ENCODE measurements at regions of chr12 and their contacts with region 1.

Region 1: GRCh38 chr12:110619534-110619953 is 5.6 kb downstream of the TCTN1 start:
- DNase-seq: peak; percentile 68
- H3K4me3 Mint-ChIP-seq: peak overlapping the region; percentile 51
- H3K27ac Mint-ChIP-seq: peak overlapping the region; percentile 80
- H3K4me1 Mint-ChIP-seq: peaks cover 8% of the 10 kb centered on the region
- H3K27me3 Mint-ChIP-seq: no peaks in the 10 kb centered on the region

Region 2: GRCh38 chr12:110543252-110543959 is 76.1 kb before region 1 on chr12:
- intact Hi-C with region 1: no loop called
- DNase-seq: no peak
- H3K4me3 Mint-ChIP-seq: no peak overlapping the region
- H3K27ac Mint-ChIP-seq: peak overlapping the region; percentile 72
- H3K4me1 Mint-ChIP-seq: peaks cover 36% of the 10 kb centered on the region
- H3K27me3 Mint-ChIP-seq: no peaks in the 10 kb centered on the region

Region 3: GRCh38 chr12:110647631-110648040 is 28.1 kb after region 1 on chr12:
- intact Hi-C with region 1: loop called (anchors 2 kb)
- DNase-seq: peak; percentile 69
- H3K4me3 Mint-ChIP-seq: peak overlapping the region; percentile 8
- H3K27ac Mint-ChIP-seq: peak overlapping the region; percentile 59
- H3K4me1 Mint-ChIP-seq: peaks cover 20% of the 10 kb centered on the region
- H3K27me3 Mint-ChIP-seq: no peaks in the 10 kb centered on the region

Region 4: GRCh38 chr12:110689281-110690126 is 70.0 kb after region 1 on chr12:
- intact Hi-C with region 1: loop called (anchors 2 kb)
- DNase-seq: peak; percentile 89
- H3K4me3 Mint-ChIP-seq: peak overlapping the region; percentile 86
- H3K27ac Mint-ChIP-seq: peak overlapping the region; percentile 96
- H3K4me1 Mint-ChIP-seq: peaks cover 44% of the 10 kb centered on the region
- H3K27me3 Mint-ChIP-seq: peaks cover 5% of the 10 kb centered on the region

Region 5: DNA sequence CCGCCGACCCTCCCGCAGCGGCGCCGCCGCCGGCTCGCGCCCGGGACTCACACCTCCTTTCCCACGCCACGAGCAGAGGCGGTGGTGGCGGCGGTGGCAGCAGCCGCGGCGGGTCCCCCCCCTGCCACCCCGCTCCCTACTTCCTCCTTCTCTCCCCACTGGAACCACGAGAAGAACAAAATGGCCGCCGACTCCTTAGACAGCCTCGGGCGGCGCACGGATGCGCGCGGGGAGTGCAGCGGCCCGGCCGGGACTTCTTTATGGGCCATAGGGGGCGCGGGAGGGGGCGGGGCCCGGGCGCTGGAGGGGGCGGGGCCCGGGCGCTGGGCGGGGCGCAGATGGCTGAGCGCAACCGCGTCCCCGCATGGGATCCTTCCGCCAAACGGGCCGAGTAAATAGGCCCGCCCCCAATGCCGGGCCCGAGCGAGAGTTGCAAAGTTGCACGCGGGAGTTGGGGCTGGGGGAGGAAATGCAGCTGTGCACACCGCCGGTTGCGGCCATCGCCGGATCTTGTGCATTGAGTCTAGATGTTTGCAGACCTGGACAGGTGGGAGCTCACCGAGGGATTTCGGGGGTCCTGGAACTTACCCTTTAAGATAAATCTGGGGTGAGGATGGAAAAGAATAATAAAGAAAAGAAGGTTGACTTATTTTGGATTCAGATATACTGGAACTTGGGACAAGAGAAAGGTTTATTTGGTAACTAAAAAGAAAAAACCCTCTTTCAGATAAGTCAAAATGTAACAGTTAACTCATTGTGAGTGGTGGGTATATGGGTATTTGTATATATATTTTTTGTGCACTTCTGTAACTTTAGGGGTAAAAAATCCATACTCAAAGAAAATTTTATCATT is 123.4 kb after region 1 on chr12 and contains the start of gene PPP1CC:
- intact Hi-C with region 1: loop called (anchors 2 kb)
- DNase-seq: peak; percentile 97
- H3K4me3 Mint-ChIP-seq: peak within 1 kb of the TSS; percentile 99
- H3K27ac Mint-ChIP-seq: peak within 1 kb of the TSS; percentile 99
- H3K4me1 Mint-ChIP-seq: peaks cover 35% of the 10 kb centered on the region
- H3K27me3 Mint-ChIP-seq: no peaks in the 10 kb centered on the region
- total RNA-seq, gene PPP1CC: 459 and 489 TPM in 2 replicates

Region 6: DNA sequence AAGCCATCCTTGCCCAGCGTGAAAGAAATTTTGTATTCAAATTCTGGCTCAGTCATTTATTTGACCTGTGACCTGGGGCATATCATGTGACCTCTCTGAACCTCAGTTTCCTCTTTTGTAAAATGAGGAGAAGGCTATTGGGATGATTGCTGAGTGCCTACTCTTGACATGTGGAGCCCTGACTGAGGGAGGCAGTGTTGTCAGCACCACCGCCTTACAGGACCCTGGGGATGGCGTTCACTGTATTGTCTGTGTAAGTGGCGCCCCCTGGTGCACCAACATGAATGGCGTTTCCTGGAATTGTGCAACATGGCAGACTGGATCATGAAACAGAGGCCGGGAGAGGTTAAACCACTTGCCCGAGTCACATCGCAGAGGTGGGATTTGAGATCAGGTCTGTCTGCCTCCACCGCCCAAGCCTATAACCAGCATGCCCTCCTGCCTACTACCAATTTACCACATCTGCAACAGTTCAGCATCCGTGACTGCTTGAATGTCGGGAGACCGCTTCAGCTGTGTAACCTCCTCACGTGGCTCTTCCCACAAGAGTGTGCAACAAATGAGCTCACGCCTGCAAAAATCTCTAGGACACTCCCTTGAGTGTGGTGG is 207.2 kb after region 1 on chr12:
- intact Hi-C with region 1: loop called (anchors 2 kb)
- DNase-seq: peak; percentile 96
- H3K4me3 Mint-ChIP-seq: peak overlapping the region; percentile 43
- H3K27ac Mint-ChIP-seq: peak overlapping the region; percentile 46
- H3K4me1 Mint-ChIP-seq: peaks cover 16% of the 10 kb centered on the region
- H3K27me3 Mint-ChIP-seq: peaks cover 10% of the 10 kb centered on the region

Measured in activated CD4-positive, alpha-beta T cell treated with anti-CD3 and anti-CD28 coated beads, Interleukin-2, amount 10 ng/mL, durations not matched to agents 24 days and 14 days (primary cell).